Activated naive CD4-positive, alpha-beta T cell treated with anti-CD3 and anti-CD28 coated beads, Interleukin-2, amount 10 ng/mL, durations not matched to agents 7 days and 5 days (primary cell): ENCODE measurements at regions of chr17 and their contacts with region 1.

Region 1: DNA sequence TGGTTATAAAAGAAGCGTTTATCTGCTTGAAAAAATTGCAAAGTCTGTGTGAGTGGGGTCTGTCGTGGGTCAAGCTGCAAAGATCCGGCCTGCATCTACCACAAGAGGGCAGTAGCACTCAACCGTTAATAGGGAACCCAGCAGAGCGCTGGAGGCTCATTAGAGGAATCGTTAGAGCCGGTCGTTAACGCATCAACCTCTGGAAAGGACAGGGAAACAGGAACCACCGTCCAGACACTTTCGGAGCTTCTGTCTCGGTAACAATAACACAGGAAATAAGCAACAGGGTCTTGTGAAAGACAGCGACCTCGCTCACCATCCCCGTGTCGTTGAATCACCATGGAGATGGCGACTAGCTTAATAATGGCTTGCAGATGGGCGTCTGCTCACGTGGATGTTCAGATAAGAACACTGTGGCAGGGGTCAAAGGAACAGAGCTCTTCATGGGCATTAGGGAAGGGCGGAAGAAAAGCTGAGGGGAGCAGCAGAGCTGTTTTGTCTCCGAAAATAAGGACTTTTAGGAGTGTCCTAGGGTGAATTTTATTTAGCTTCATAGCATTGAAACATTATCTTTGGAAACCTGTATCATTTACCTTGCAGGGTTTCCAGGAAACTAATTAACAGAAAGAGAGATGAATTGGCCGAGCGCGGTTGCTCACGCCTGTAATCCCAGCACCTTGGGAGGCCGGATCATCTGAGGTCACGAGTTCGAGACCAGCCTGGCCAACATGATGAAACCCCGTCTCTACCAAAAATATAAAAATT is 11.9 kb upstream of the NSRP1 start:
- DNase-seq: peak; percentile 78
- H3K4me3 Mint-ChIP-seq: peak overlapping the region; percentile 63
- H3K27ac Mint-ChIP-seq: no peak overlapping the region
- H3K4me1 Mint-ChIP-seq: peaks cover 5% of the 10 kb centered on the region
- H3K27me3 Mint-ChIP-seq: peaks cover 16% of the 10 kb centered on the region

Region 2: GRCh38 chr17:30093463-30094147 is 11.2 kb before region 1 on chr17:
- CTCF ChIA-PET with region 1: interaction called, 44 read pairs
- DNase-seq: peak; percentile 48
- H3K4me3 Mint-ChIP-seq: no peak overlapping the region
- H3K27ac Mint-ChIP-seq: no peak overlapping the region
- H3K4me1 Mint-ChIP-seq: peaks cover 4% of the 10 kb centered on the region
- H3K27me3 Mint-ChIP-seq: peaks cover 41% of the 10 kb centered on the region

Region 3: GRCh38 chr17:30116661-30117551 is 12.1 kb after region 1 on chr17 and contains the start of gene NSRP1:
- CTCF ChIA-PET with region 1: interaction called, 23 read pairs
- DNase-seq: peak; percentile 97
- H3K4me3 Mint-ChIP-seq: peak within 1 kb of the TSS; percentile 90
- H3K27ac Mint-ChIP-seq: peak within 1 kb of the TSS; percentile 97
- H3K4me1 Mint-ChIP-seq: peaks cover 48% of the 10 kb centered on the region
- H3K27me3 Mint-ChIP-seq: no peaks in the 10 kb centered on the region

Region 4: GRCh38 chr17:30124273-30124796 is 19.6 kb after region 1 on chr17:
- CTCF ChIA-PET with region 1: interaction called, 64 read pairs
- DNase-seq: no peak
- H3K4me3 Mint-ChIP-seq: no peak overlapping the region
- H3K27ac Mint-ChIP-seq: no peak overlapping the region
- H3K4me1 Mint-ChIP-seq: peaks cover 33% of the 10 kb centered on the region
- H3K27me3 Mint-ChIP-seq: no peaks in the 10 kb centered on the region

Region 5: GRCh38 chr17:30236766-30237165 is 132.0 kb after region 1 on chr17:
- CTCF ChIA-PET with region 1: interaction called, 15 read pairs
- DNase-seq: peak; percentile 30
- H3K4me3 Mint-ChIP-seq: peak overlapping the region; percentile 36
- H3K27ac Mint-ChIP-seq: no peak overlapping the region
- H3K4me1 Mint-ChIP-seq: peaks cover 22% of the 10 kb centered on the region
- H3K27me3 Mint-ChIP-seq: peaks cover 90% of the 10 kb centered on the region

Region 6: DNA sequence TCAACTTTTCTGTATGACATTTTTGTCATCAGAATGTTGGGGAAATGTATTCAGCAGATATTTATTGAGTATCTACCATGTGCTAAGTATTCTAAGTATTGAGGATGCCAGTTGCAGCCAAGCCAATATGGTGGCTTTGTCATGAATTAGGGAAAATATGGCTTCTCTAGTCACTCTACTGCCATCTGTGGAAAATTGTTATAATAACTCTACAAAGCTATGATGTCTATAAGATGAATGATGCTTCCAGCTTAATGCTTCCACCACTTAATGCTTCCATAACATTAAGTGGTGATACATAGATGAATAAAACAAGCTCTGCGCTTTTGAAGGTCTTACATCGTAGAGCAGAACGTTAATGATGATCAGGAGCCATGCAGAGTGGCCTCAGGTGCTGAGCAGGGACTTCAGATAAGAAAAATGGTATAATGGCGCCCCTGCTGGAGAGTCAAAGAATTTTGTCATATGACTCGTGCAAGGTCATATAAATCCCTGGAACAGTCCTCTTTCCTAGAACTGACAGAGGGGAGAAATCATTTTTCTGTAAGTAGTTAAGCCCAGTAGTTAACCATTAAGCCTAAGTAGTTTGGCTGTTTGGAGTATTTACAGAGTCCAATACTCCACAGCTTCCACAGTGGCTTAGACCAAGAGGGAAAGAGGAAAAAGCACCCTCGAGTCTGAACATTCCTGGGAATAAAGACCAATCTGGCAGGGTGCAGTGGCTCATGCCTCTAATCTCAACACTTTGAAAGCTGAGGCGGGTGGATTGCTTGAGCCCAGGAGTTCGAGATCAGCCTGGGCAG is 231.8 kb after region 1 on chr17:
- CTCF ChIA-PET with region 1: interaction called, 92 read pairs
- DNase-seq: peak; percentile 73
- H3K4me3 Mint-ChIP-seq: no peak overlapping the region
- H3K27ac Mint-ChIP-seq: no peak overlapping the region
- H3K4me1 Mint-ChIP-seq: peaks cover 33% of the 10 kb centered on the region
- H3K27me3 Mint-ChIP-seq: peaks cover 17% of the 10 kb centered on the region

Region 7: DNA sequence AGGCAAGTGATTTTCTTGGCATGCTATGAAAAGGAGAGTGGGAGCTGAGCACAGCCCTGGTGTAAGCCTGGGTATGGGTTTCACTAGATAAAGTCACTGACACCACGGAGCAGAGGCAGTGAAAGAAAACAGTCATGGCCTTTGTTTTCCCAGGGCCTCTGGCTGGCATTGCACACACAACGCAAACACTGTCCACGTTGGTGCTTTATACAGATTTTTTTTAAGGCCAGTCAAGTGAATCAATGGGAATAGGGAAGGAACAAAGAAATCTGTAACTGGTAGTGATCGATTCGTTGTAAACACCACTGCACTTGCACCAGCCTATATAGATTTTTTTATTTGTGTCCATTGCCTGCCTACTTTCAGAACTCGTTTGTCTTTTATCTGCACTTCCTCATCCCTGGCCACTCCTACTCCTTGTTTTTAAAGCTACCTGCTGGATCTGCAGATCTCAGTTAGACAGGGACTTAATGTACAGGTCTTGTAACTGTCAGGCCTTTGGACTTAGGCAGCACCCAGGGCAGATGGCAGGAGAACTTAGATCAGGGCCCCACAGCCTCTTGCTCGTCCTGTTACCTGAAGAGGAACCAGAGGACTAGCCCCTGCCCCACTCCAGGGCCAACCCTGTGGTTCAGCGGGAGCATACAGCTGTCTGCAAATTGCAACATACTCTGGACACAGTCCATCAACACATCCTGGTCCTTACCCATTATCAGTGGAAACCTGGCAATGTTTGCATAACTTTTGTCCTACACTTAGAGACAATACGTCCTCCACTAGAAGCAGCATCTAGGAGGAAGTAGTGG is 239.7 kb after region 1 on chr17:
- CTCF ChIA-PET with region 1: interaction called, 36 read pairs
- DNase-seq: no peak
- H3K4me3 Mint-ChIP-seq: no peak overlapping the region
- H3K27ac Mint-ChIP-seq: no peak overlapping the region
- H3K4me1 Mint-ChIP-seq: peaks cover 5% of the 10 kb centered on the region
- H3K27me3 Mint-ChIP-seq: peaks cover 4% of the 10 kb centered on the region